Ovary (tissue), 10 donors: ENCODE measurements at regions of chr6 and their contacts with region 1.

Region 1: DNA sequence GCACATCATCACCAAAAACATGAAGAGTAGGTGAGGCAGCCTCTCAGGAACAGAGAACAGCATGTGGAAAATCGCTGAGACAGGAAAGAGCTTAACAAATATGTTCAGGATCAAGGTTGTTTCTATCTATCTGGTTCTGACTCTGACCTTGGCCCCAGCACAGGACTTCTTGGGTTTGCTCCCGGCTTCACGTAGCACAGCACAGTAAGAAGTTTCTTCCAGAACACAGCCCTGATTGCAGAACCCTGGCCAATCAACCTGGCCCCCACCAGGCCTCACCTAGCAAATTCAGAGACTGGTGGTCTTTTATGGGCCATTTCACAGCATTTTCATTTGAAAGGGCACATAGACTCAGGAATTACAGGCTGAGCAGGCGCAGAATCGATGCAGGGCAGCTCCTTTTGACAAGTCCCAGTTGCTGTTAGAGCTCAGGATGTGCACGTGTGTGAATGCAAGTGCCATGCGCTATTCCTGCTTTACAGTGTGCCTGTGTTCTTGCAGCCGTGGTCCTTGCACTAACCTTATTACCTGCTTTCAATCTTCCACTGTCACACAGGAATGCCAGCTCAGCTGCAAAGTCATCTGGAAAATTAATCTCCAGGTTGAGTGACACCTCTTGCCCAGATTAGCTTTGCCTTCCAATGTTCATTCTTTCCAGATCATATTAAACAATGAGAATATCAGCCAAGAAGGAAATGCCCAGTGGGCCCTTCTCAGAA is 100.5 kb upstream of the SLC2A12 start:
- DNase-seq: peak in 4 of 5 donors; percentile 43 to 65 (median 54)
- H3K4me3 ChIP-seq: no peak overlapping the region
- H3K27ac ChIP-seq: no peak overlapping the region
- H3K4me1 ChIP-seq: no peaks in the 10 kb centered on the region
- H3K27me3 ChIP-seq: no peaks in the 10 kb centered on the region
- CTCF ChIP-seq: no peak
- EP300 ChIP-seq: no peak
- POLR2A ChIP-seq: no peak

Region 2: GRCh38 chr6:134676307-134677281 is 523.7 kb after region 1 on chr6:
- intact Hi-C with region 1: no loop called
- DNase-seq: no peak
- H3K4me3 ChIP-seq: no peak overlapping the region
- H3K27ac ChIP-seq: no peak overlapping the region
- H3K4me1 ChIP-seq: no peaks in the 10 kb centered on the region
- H3K27me3 ChIP-seq: no peaks in the 10 kb centered on the region
- CTCF ChIP-seq: no peak
- EP300 ChIP-seq: no peak
- POLR2A ChIP-seq: no peak

Region 3: DNA sequence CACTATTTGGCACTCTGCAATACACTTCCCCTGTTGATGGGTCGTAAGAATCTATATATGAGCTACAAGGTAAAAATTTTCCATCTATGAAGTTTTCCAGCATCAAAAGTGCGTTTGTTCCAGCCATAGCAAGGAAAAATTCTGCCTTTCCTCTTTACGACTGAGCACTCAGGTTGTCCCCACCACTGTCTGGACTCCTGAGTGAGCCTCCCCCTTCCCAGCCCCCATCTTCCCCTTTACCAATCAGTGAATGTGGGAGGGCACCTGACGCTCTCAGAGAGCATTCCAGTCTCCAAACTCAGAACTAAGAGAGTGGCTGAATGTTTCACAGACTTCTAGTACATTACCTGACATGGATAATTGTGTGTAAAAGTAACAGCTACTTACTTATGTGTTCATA is 797.0 kb after region 1 on chr6 and contains the start of gene ALDH8A1:
- intact Hi-C with region 1: loop called in 2 of 4 experiments (anchors 10 kb)
- DNase-seq: no peak
- H3K4me3 ChIP-seq: no peak within 1 kb of the TSS
- H3K27ac ChIP-seq: no peak within 1 kb of the TSS
- H3K4me1 ChIP-seq: no peaks in the 10 kb centered on the region
- H3K27me3 ChIP-seq: no peaks in the 10 kb centered on the region
- CTCF ChIP-seq: no peak
- EP300 ChIP-seq: no peak
- POLR2A ChIP-seq: no peak
- total RNA-seq, gene ALDH8A1: 0.51 to 1.3 (median 0.80) TPM